HEK293 (cell line): ENCODE measurements at regions of chr7 and their contacts with region 1.

Region 1: GRCh38 chr7:23712368-23713284 is 2.6 kb downstream of the STK31 start:
- H3K4me3 ChIP-seq: no peak overlapping the region
- H3K27ac ChIP-seq: no peak overlapping the region
- H3K4me1 ChIP-seq: no peaks in the 10 kb centered on the region
- CTCF ChIP-seq: 0 out of 2 replicates have a peak, but pooled peaks have one; percentile 12

Region 2: DNA sequence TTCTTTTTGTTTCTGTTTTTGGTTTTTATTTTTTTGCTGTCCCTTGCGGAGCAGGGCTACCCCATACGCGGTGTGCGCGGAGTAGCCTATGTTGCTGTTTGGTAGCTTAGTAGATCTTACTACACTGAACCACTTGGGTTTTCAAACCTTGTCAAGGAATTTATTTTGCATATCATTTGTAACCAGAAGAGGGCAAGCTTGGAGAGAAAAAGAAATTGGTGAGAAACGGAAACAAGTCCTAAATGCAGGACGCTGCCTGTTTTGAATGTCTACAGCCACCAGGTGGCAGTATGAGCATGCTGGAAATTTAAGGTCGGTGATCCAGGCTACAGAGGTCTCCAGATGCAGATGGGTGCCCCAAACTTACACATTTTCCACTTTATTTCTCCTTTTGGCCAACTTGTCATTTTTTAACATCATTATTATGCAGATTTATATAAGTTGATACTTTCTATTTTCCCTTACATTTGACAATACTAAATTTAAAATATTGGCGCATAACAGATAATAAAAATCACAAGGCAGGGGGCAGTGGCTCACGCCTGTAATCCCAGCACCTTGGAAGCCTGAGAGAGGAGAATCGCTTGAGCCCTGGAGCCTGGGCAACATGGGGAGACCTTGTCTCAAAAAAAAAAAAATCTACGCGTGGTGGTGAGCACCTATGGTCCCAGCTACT is 165.6 kb before region 1 on chr7:
- CTCF ChIA-PET with region 1: interaction called, 18 read pairs
- POLR2A ChIA-PET with region 1: interaction called, 4 read pairs
- H3K4me3 ChIP-seq: no peak overlapping the region
- H3K27ac ChIP-seq: no peak overlapping the region
- H3K4me1 ChIP-seq: no peaks in the 10 kb centered on the region; the same call in 1 of the 2 replicates
- CTCF ChIP-seq: peak; percentile 87

Region 3: GRCh38 chr7:23570592-23571200 is 141.9 kb before region 1 on chr7:
- CTCF ChIA-PET with region 1: interaction called, 70 read pairs
- POLR2A ChIA-PET with region 1: interaction called, 3 read pairs
- H3K4me3 ChIP-seq: no peak overlapping the region
- H3K27ac ChIP-seq: no peak overlapping the region
- H3K4me1 ChIP-seq: no peaks in the 10 kb centered on the region
- CTCF ChIP-seq: peak; percentile 68; the same call in 1 of the 2 replicates

Region 4: GRCh38 chr7:23654508-23654907 is 58.1 kb before region 1 on chr7:
- CTCF ChIA-PET with region 1: interaction called, 10 read pairs
- POLR2A ChIA-PET with region 1: no interaction called
- H3K4me3 ChIP-seq: no peak overlapping the region
- H3K27ac ChIP-seq: no peak overlapping the region
- H3K4me1 ChIP-seq: no peaks in the 10 kb centered on the region
- CTCF ChIP-seq: no peak

Region 5: GRCh38 chr7:23791721-23792120 is 79.1 kb after region 1 on chr7:
- CTCF ChIA-PET with region 1: no interaction called
- POLR2A ChIA-PET with region 1: no interaction called
- H3K4me3 ChIP-seq: no peak overlapping the region
- H3K27ac ChIP-seq: no peak overlapping the region
- H3K4me1 ChIP-seq: no peaks in the 10 kb centered on the region
- CTCF ChIP-seq: no peak

Region 6: GRCh38 chr7:24869572-24869971 is 1156.9 kb after region 1 on chr7:
- CTCF ChIA-PET with region 1: no interaction called
- POLR2A ChIA-PET with region 1: no interaction called
- H3K4me3 ChIP-seq: no peak overlapping the region
- H3K27ac ChIP-seq: no peak overlapping the region
- H3K4me1 ChIP-seq: peaks cover 7% of the 10 kb centered on the region; the same call in 1 of the 2 replicates
- CTCF ChIP-seq: no peak